ENCODE measurements at regions of chr2 and their contacts with region 1.

Region 1: DNA sequence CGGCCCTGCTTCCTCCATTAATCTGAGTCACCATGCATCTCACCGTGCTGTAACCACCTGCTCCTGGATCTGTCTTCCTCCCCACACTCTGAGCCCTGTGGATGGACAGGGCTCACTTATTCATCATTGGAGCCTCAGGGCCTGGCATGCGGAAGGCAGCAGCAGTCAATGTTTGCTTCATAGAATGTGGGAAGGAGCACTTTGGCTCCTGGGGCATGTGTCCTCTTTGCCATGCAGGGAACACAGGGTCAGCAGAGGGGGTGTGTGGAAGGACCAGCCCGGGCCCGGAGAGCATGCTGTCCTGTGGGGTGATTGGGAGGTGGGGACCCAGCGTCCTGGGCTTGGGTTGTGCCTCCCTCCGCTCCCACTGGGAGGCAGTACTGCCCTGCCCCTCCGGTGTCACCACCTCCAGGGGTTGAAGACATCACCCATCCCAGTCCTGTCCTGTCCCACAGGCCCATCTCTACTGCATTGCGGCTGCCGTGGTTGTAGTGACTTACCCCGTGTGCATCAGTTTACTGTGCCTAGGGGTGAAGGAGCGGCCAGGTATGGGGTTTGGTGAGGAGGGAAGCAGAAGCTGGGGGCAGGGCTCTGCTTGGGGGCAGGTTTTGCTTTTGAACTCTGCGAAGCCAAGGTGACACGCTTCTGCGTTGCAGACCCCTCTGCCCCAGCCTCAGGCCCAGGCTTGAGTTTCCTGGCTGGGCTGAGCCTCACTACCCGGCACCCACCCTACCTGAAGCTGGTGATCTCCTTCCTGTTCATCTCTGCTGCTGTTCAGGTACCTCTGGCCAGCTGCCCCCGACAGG is 11.5 kb downstream of the MFSD2B start:
- DNase-seq: peak; percentile 79
- H3K4me3 ChIP-seq: no peak overlapping the region
- H3K27ac ChIP-seq: no peak overlapping the region
- H3K4me1 ChIP-seq: peaks cover 16% of the 10 kb centered on the region
- H3K27me3 ChIP-seq: no peaks in the 10 kb centered on the region
- CTCF ChIP-seq: peak; percentile 22 to 49

Region 2: DNA sequence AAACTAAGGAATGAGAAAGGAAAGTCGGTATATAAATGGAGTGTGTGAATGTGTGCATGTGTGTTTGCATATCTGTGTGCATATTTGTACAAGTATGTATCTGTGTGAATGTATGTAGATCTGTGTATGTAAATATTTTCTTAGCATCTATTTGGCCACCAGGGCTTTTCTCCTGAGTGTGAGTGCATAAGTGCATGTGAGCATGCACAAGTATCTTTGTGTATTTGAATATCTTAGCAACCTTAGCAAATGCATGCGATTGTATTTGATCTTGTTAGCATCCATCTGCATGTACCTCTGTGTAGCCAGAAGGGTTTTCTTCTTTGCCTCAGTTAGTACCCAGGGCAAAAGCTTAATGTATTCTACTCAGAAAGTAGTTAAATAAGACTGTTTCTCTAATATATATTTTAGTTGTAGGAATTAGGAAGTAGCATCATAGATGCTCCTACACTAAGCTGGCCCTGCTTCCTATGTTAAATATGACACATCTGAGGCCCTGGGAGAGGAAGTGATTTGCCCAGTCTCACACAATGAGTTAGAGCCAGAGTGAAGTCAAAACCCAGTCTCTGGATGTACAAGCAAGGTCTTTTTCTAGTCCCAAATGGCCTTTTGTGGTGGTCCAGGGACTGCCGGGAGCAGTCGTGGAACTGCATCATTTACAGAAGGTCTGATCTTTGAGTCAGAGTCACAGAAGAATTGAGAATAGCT is 37.3 kb after region 1 on chr2:
- CTCF ChIA-PET with region 1: no interaction called
- dilution Hi-C with region 1: no loop called
- in situ Hi-C with region 1: no loop called
- intact Hi-C with region 1: loop called (anchors 1 kb)
- DNase-seq: no peak
- H3K4me3 ChIP-seq: no peak overlapping the region
- H3K27ac ChIP-seq: no peak overlapping the region
- H3K4me1 ChIP-seq: no peaks in the 10 kb centered on the region
- H3K27me3 ChIP-seq: no peaks in the 10 kb centered on the region
- CTCF ChIP-seq: no peak

Measured in mammary epithelial cell (primary cell).